CD8-positive, alpha-beta T cell (primary cell): ENCODE measurements at regions of chr20 and their contacts with region 1.

Region 1: GRCh38 chr20:62953839-62954703 is 1.6 kb downstream of the SLC17A9 start:
- DNase-seq: peak; percentile 46 to 93 (median 81)
- ATAC-seq: peak; percentile 88
- H3K4me3 ChIP-seq: peak overlapping the region; percentile 50 to 57
- H3K4me3 Mint-ChIP-seq: peak overlapping the region; percentile 82
- H3K27ac ChIP-seq: peak overlapping the region; percentile 62 to 92
- H3K27ac Mint-ChIP-seq: peak overlapping the region; percentile 91
- H3K4me1 ChIP-seq: peaks cover 48% of the 10 kb centered on the region
- H3K4me1 Mint-ChIP-seq: peaks cover 42% of the 10 kb centered on the region
- H3K27me3 ChIP-seq: no peaks in the 10 kb centered on the region
- H3K27me3 Mint-ChIP-seq: no peaks in the 10 kb centered on the region
- CTCF ChIP-seq: no peak

Region 2: GRCh38 chr20:62907384-62908317 is 46.4 kb before region 1 on chr20:
- CTCF ChIA-PET with region 1: interaction called, 11 read pairs
- POLR2A ChIA-PET with region 1: interaction called, 4 read pairs
- intact Hi-C with region 1: no loop called
- DNase-seq: peak in 4 of 9 experiments; percentile 60 to 74 (median 63)
- ATAC-seq: peak; percentile 96
- H3K4me3 ChIP-seq: no peak overlapping the region
- H3K4me3 Mint-ChIP-seq: no peak overlapping the region
- H3K27ac ChIP-seq: no peak overlapping the region
- H3K27ac Mint-ChIP-seq: peak overlapping the region; percentile 37
- H3K4me1 ChIP-seq: peaks cover 7% of the 10 kb centered on the region
- H3K4me1 Mint-ChIP-seq: peaks cover 28% of the 10 kb centered on the region
- H3K27me3 ChIP-seq: no peaks in the 10 kb centered on the region
- H3K27me3 Mint-ChIP-seq: no peaks in the 10 kb centered on the region
- CTCF ChIP-seq: peak; percentile 70

Region 3: DNA sequence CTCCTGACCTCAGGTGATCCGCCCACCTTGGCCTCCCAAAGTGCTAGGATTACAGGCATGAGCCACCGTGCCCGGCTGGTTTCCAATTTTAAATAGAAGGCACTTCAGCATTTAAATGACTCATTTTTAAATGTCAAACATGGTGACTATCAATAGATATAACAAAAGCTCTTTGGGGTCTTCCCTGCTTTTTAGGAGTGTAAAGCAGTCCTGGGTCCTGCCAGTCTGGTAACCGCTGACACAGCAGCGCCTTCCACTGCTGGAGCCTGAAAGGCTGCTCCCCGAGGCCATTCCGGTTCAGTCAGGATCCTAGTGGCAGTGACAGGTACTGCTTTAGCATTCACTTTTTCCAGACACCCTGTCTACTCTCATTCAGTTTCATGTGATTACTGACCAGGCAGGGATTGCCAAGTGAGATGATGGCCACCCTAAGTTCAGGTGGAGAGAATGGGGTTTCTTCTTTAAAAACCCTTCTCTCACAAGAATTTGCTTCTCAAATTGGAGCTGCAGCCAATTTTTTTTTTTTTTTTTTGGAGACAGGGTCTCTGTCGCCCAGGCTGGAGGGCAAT is 32.9 kb before region 1 on chr20:
- CTCF ChIA-PET with region 1: interaction called, 11 read pairs
- POLR2A ChIA-PET with region 1: interaction called, 9 read pairs
- intact Hi-C with region 1: loop called (anchors 1 kb)
- DNase-seq: peak; percentile 20 to 85 (median 65)
- ATAC-seq: peak; percentile 66
- H3K4me3 ChIP-seq: peak overlapping the region in 1 of 2 experiments; percentile 18
- H3K4me3 Mint-ChIP-seq: peak overlapping the region; percentile 83
- H3K27ac ChIP-seq: peak overlapping the region in 1 of 2 experiments; percentile 62
- H3K27ac Mint-ChIP-seq: peak overlapping the region; percentile 89
- H3K4me1 ChIP-seq: peaks cover 89% of the 10 kb centered on the region
- H3K4me1 Mint-ChIP-seq: peaks cover 82% of the 10 kb centered on the region
- H3K27me3 ChIP-seq: no peaks in the 10 kb centered on the region
- H3K27me3 Mint-ChIP-seq: no peaks in the 10 kb centered on the region
- CTCF ChIP-seq: peak; percentile 80

Region 4: DNA sequence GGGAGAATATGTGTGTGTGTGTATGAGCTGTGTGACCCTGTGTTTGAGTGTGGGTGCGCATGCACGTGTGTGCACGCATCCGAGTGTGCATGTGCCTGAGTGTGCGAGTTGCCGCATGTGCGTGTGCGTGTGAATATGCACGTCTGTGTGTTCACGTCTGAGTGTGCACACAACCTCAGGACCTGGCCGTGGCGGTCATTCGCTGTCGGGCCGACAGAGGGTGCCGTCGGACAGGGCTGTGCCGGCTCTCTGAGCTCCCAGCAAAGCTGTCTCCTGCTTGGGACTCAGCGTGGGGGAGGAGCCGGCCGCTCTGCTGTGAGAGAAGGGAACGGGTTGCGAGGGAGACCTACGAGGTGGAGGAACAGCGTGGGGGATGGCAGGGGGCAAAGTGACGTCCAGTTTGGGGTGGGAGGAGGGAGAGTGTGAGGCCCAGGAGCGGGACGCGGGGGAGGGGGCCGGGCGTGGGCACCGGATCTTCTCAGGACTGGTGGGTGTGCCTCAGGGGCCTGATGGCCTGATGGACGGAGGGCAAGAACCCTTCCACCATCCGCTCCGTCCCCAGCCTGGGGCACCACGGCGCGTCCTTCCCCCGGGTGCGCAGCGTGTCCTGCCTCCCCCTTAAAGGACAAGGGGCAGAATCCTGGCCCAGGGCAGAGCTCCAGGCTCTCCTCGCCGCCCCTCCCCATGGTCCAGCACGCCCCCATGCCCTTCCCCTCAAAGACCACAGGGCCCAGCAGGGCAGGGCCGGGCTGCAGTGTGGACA is 18.4 kb after region 1 on chr20:
- CTCF ChIA-PET with region 1: interaction called, 10 read pairs
- POLR2A ChIA-PET with region 1: interaction called, 8 read pairs
- intact Hi-C with region 1: no loop called
- DNase-seq: peak; percentile 75 to 88 (median 86)
- ATAC-seq: peak; percentile 99
- H3K4me3 ChIP-seq: peak overlapping the region in 1 of 2 experiments; percentile 36
- H3K4me3 Mint-ChIP-seq: peak overlapping the region; percentile 79
- H3K27ac ChIP-seq: no peak overlapping the region
- H3K27ac Mint-ChIP-seq: peak overlapping the region; percentile 42
- H3K4me1 ChIP-seq: peaks cover 18% of the 10 kb centered on the region
- H3K4me1 Mint-ChIP-seq: peaks cover 23% of the 10 kb centered on the region
- H3K27me3 ChIP-seq: peaks cover 16 to 48% of the 10 kb centered on the region in 2 experiments
- H3K27me3 Mint-ChIP-seq: peaks cover 45% of the 10 kb centered on the region
- CTCF ChIP-seq: peak; percentile 84

Region 5: DNA sequence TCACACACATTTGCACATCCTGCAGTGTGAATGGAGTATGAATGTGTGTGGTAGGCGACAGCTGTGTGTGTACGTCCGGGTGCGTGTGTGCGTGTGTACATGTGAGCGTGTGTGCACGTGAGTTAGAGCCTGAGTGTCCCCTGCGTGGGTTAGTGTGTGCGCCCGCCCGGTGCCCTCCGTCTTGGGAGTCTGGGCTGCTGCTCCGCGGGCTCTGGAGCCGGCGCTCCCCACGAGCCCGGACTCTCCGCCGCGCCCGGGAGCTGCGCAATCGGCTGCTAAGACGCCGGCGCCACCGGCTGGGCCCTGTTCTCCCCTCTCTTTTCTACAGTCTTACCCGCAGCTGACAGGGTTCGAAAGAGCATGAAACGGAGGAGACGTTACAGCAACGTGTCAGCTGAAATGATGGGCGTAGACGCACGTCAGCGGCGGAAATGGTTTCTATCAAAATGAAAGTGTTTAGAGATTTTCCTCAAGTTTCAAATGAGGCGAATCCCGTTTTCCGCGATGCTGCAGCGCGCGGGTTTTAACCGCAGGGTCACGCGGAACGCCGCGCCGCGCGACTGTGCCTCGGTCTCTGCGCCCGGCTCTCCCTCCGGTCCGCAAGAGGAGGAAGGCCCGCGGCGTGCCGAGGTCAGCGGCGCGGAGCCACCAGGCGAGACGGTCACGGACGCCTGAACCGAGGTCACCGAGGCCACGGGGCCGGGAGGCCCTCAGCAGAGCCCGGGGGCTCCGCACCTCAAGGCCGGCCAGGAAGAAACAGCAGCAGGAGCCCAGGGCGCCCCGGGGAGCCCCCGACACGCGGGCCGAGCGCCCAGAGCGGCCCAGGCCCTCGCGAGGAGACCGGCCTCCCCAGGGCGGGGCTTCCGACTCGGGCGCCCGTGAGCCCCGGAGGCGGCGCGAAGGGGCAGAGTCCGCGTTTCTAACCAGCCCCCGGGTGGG is 148.0 kb after region 1 on chr20:
- CTCF ChIA-PET with region 1: no interaction called
- POLR2A ChIA-PET with region 1: no interaction called
- intact Hi-C with region 1: loop called in 1 of 2 experiments (anchors 10 kb)
- DNase-seq: peak; percentile 30 to 84 (median 59)
- ATAC-seq: peak; percentile 68
- H3K4me3 ChIP-seq: peak overlapping the region; percentile 74 to 98
- H3K4me3 Mint-ChIP-seq: peak overlapping the region; percentile 87
- H3K27ac ChIP-seq: peak overlapping the region; percentile 89 to 98
- H3K27ac Mint-ChIP-seq: peak overlapping the region; percentile 91
- H3K4me1 ChIP-seq: no peaks in the 10 kb centered on the region
- H3K4me1 Mint-ChIP-seq: peaks cover 11% of the 10 kb centered on the region
- H3K27me3 ChIP-seq: no peaks in the 10 kb centered on the region
- H3K27me3 Mint-ChIP-seq: no peaks in the 10 kb centered on the region
- CTCF ChIP-seq: no peak